Mammary epithelial cell (primary cell): ENCODE measurements at regions of chr4 and their contacts with region 1.

Region 1: GRCh38 chr4:147866532-147867271 is 134.8 kb downstream of the ARHGAP10 start:
- DNase-seq: peak; percentile 71
- H3K4me3 ChIP-seq: no peak overlapping the region
- H3K27ac ChIP-seq: no peak overlapping the region
- H3K4me1 ChIP-seq: no peaks in the 10 kb centered on the region
- H3K27me3 ChIP-seq: no peaks in the 10 kb centered on the region
- CTCF ChIP-seq: peak; percentile 99

Region 2: GRCh38 chr4:147111033-147111367 is 755.7 kb before region 1 on chr4:
- CTCF ChIA-PET with region 1: no interaction called
- dilution Hi-C with region 1: no loop called
- in situ Hi-C with region 1: no loop called
- intact Hi-C with region 1: loop called (anchors 1 kb)
- DNase-seq: no peak
- H3K4me3 ChIP-seq: no peak overlapping the region
- H3K27ac ChIP-seq: no peak overlapping the region
- H3K4me1 ChIP-seq: no peaks in the 10 kb centered on the region
- H3K27me3 ChIP-seq: no peaks in the 10 kb centered on the region
- CTCF ChIP-seq: peak in 1 of 2 donors; percentile 28

Region 3: DNA sequence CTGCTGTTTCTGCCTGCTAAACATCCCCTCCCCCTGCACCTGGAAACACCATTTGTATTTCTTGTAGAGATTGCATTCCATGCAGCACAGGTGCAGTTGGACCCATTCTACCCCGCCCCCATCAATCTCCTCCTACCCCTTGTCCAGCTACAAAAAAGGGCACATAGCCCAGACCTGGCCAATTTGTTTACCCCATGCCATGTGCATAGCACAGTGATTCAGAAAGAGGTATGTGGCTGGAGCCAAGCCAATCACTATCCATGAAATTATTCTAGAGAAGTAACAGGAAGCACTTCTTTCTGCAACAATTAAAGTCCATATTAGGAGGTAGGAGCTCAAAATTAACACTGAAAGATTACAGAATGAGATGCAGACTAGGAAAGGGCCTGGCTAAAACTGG is 269.7 kb before region 1 on chr4:
- CTCF ChIA-PET with region 1: no interaction called
- dilution Hi-C with region 1: no loop called
- in situ Hi-C with region 1: no loop called
- intact Hi-C with region 1: loop called (anchors 1 kb)
- DNase-seq: peak; percentile 64
- H3K4me3 ChIP-seq: no peak overlapping the region
- H3K27ac ChIP-seq: no peak overlapping the region
- H3K4me1 ChIP-seq: peaks cover 19% of the 10 kb centered on the region
- H3K27me3 ChIP-seq: no peaks in the 10 kb centered on the region
- CTCF ChIP-seq: no peak

Region 4: GRCh38 chr4:147707865-147708672 is 158.6 kb before region 1 on chr4:
- CTCF ChIA-PET with region 1: interaction called, 4 read pairs
- dilution Hi-C with region 1: no loop called
- in situ Hi-C with region 1: loop called (anchors 5 kb)
- intact Hi-C with region 1: loop called (anchors 1 kb)
- DNase-seq: peak; percentile 30
- H3K4me3 ChIP-seq: no peak overlapping the region
- H3K27ac ChIP-seq: no peak overlapping the region
- H3K4me1 ChIP-seq: no peaks in the 10 kb centered on the region
- H3K27me3 ChIP-seq: no peaks in the 10 kb centered on the region
- CTCF ChIP-seq: peak; percentile 86 to 92

Region 5: GRCh38 chr4:147816382-147817254 is 50.1 kb before region 1 on chr4:
- CTCF ChIA-PET with region 1: no interaction called
- dilution Hi-C with region 1: no loop called
- in situ Hi-C with region 1: no loop called
- intact Hi-C with region 1: no loop called
- DNase-seq: no peak
- H3K4me3 ChIP-seq: no peak overlapping the region
- H3K27ac ChIP-seq: no peak overlapping the region
- H3K4me1 ChIP-seq: peaks cover 30% of the 10 kb centered on the region
- H3K27me3 ChIP-seq: no peaks in the 10 kb centered on the region
- CTCF ChIP-seq: no peak

Region 6: DNA sequence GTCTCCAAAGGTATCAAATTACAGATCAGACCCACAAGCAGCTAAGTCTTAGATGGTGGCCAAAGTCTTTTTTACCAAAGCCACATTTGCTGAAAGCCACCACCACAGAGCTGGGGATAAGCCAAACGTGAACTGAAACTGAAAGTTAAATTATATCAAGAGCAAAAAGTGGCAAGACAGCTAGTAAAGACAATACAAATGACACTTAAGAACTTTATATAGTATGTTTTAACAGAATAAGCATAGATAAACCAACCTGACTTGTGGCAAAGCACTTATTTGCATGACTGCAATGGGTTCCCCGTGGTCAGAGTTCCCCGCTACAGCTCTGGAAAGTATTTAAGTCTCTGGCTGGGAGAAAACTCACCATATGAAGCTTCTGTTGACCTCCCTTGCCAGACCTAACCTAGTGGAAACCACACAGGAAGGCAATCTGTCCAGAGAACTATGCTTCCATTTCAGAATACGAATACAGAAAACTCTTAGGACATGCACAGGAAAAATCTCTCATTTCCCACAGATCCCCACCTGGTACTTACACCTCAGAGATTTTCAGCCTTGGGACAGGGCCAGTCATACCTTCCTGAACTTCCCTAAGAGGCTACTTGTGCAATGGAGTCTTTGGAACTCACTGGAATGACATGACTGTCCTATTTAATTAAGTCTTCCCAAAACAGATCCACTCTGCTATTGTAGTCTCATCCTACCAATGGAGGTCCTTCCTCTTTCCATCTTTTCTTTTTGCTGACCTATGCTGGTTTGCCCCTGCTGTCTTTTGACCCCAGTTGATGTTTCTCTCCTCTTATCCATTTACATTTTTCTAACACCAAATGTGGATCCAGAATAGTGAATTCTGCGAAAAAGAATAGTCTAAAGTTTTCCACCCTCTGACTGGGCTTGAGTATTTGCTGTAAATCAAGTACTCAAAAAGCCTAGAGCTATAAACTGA is 350.4 kb after region 1 on chr4:
- CTCF ChIA-PET with region 1: no interaction called
- dilution Hi-C with region 1: no loop called
- in situ Hi-C with region 1: no loop called
- intact Hi-C with region 1: no loop called
- DNase-seq: no peak
- H3K4me3 ChIP-seq: no peak overlapping the region
- H3K27ac ChIP-seq: no peak overlapping the region
- H3K4me1 ChIP-seq: no peaks in the 10 kb centered on the region
- H3K27me3 ChIP-seq: no peaks in the 10 kb centered on the region
- CTCF ChIP-seq: no peak

Region 7: DNA sequence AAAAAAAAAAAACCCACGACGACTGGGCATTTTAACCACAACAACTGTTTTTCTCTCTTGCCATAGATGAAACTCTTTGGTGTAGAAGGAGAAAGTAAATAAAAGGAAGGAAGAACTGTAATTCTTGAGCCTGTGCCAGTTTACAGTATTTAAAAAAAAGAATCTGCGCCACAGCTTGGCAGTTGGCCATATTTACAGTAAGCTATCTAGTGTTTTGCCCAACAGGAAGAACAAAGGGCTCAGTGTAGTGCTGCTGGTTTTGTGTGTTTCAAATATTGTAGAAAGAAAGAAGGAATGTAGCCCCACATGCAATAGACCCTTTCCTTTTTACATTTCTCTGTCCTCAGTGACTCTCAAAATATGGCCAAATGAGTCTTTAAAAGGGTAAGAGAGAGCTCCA is 509.4 kb after region 1 on chr4:
- CTCF ChIA-PET with region 1: no interaction called
- dilution Hi-C with region 1: no loop called
- in situ Hi-C with region 1: no loop called
- intact Hi-C with region 1: no loop called
- DNase-seq: peak; percentile 62
- H3K4me3 ChIP-seq: no peak overlapping the region
- H3K27ac ChIP-seq: no peak overlapping the region
- H3K4me1 ChIP-seq: peaks cover 3% of the 10 kb centered on the region
- H3K27me3 ChIP-seq: no peaks in the 10 kb centered on the region
- CTCF ChIP-seq: no peak